CD14-positive monocyte (primary cell): ENCODE measurements at regions of chr22 and their contacts with region 1.

Region 1: GRCh38 chr22:41132550-41132949 is 40.2 kb downstream of the EP300 start:
- DNase-seq: no peak
- H3K4me3 ChIP-seq: no peak overlapping the region
- H3K4me3 Mint-ChIP-seq: no peak overlapping the region
- H3K27ac ChIP-seq: no peak overlapping the region
- H3K27ac Mint-ChIP-seq: peak overlapping the region in 2 of 7 donors; percentile 37
- H3K4me1 ChIP-seq: no peaks in the 10 kb centered on the region
- H3K4me1 Mint-ChIP-seq: peaks cover 1% of the 10 kb centered on the region
- H3K27me3 ChIP-seq: no peaks in the 10 kb centered on the region
- H3K27me3 Mint-ChIP-seq: peaks cover 0 to 1% (median 0%) of the 10 kb centered on the region in 3 donors
- CTCF ChIP-seq: no peak

Region 2: GRCh38 chr22:41178425-41178975 is 46.0 kb after region 1 on chr22:
- intact Hi-C with region 1: loop called in 1 of 2 experiments (anchors 5 kb)
- DNase-seq: no peak
- H3K4me3 ChIP-seq: no peak overlapping the region
- H3K4me3 Mint-ChIP-seq: no peak overlapping the region
- H3K27ac ChIP-seq: no peak overlapping the region
- H3K27ac Mint-ChIP-seq: peak overlapping the region in 1 of 7 donors; percentile 1
- H3K4me1 ChIP-seq: peaks cover 8 to 9% of the 10 kb centered on the region in 2 donors
- H3K4me1 Mint-ChIP-seq: peaks cover 9% of the 10 kb centered on the region
- H3K27me3 ChIP-seq: no peaks in the 10 kb centered on the region
- H3K27me3 Mint-ChIP-seq: no peaks in the 10 kb centered on the region
- CTCF ChIP-seq: no peak

Region 3: DNA sequence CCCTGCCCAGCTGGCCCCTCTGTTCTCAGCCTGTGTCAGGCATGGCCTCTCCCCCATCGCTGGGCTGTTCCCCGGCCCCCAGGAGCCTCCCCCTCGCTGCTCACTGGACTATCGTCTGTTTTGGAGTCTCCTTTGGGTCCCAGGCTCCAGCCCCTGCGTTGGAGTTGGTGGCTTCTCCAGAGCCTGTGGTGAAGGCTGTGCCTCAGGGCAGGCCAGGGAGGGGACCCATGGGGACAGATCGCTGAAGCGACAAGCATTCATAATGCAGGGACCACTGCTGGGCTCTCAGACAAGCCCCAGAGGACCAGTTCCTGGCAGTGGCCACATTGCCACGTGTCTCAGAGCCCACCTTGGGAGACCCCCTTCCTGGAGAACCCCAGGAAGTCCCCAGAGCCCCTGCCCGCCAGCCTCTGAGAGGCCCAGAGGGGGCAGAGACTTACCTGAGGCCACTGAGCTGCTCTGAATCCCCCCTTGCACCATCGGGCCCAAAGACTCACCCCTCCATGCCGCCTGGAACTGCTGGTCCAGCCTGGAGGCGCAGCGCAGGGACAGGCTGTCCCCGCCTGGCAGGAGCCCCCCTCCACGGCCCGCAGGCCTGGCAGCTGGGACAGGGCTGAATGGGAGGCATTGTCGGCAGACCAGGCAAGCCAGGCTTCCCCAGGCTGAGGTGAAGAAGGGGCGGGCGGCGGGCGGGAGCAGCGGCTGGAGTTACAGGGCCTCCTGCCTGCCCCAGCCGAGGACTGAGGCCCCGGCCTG is 108.0 kb after region 1 on chr22 and contains the start of gene CHADL:
- intact Hi-C with region 1: no loop called
- DNase-seq: no peak
- H3K4me3 ChIP-seq: no peak within 1 kb of the TSS
- H3K4me3 Mint-ChIP-seq: no peak within 1 kb of the TSS
- H3K27ac ChIP-seq: no peak within 1 kb of the TSS
- H3K27ac Mint-ChIP-seq: peak within 1 kb of the TSS in 2 of 7 donors; percentile 40 to 68
- H3K4me1 ChIP-seq: peaks cover 6 to 14% of the 10 kb centered on the region in 2 donors
- H3K4me1 Mint-ChIP-seq: peaks cover 3% of the 10 kb centered on the region
- H3K27me3 ChIP-seq: no peaks in the 10 kb centered on the region
- H3K27me3 Mint-ChIP-seq: peaks cover 0 to 10% (median 6%) of the 10 kb centered on the region in 3 donors
- CTCF ChIP-seq: no peak
- polyA plus RNA-seq, gene CHADL: 0.11 to 0.35 (median 0.27) TPM